GM12878 (cell line): ENCODE measurements at regions of chr20 and their contacts with region 1.

Region 1: GRCh38 chr20:61436678-61437279 is 184.7 kb downstream of the CDH4 start:
- DNase-seq: no peak
- ATAC-seq: no peak
- H3K4me3 ChIP-seq: no peak overlapping the region
- H3K27ac ChIP-seq: no peak overlapping the region
- H3K4me1 ChIP-seq: no peaks in the 10 kb centered on the region
- H3K27me3 ChIP-seq: no peaks in the 10 kb centered on the region
- CTCF ChIP-seq: no peak
- EP300 ChIP-seq: no peak
- POLR2A ChIP-seq: no peak
- RAD21 ChIP-seq: no peak

Region 2: DNA sequence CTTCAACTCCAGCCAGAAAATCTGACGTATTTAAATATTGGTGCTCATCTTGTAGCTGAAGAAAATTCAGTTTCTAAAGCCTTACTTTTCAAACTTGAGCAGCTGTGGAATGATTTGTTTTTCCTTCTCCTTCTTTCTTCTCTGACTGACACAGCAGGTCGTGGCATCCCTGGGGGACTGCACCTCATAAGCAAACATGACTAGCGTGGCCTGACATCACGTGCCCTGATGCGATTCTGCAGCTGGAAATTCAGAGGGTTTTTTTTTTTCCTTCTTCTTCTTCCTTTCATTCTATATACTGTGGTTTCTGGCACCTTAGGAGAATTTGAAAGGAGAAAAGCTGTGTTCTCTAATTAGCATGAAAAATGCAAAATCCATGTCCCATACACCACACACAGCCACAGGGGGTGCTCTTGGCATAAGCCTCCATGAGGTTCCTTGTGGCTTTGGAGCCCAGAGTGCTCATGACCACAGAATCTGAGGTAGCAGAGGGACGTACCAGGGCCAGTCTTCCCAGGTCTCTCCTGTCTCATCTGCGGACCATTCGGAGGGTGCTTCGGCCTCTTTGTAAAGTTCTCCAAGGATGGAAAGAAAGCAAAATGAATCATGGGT is 443.2 kb before region 1 on chr20:
- CTCF ChIA-PET with region 1: no interaction called
- POLR2A ChIA-PET with region 1: no interaction called
- RAD21 ChIA-PET with region 1: no interaction called
- SMC1A ChIA-PET with region 1: no interaction called
- in situ Hi-C with region 1: loop called (anchors 25 kb)
- intact Hi-C with region 1: no loop called
- DNase-seq: no peak
- ATAC-seq: no peak
- H3K4me3 ChIP-seq: no peak overlapping the region
- H3K27ac ChIP-seq: no peak overlapping the region
- H3K4me1 ChIP-seq: no peaks in the 10 kb centered on the region
- H3K27me3 ChIP-seq: no peaks in the 10 kb centered on the region
- CTCF ChIP-seq: no peak
- EP300 ChIP-seq: no peak
- POLR2A ChIP-seq: no peak
- RAD21 ChIP-seq: no peak

Region 3: DNA sequence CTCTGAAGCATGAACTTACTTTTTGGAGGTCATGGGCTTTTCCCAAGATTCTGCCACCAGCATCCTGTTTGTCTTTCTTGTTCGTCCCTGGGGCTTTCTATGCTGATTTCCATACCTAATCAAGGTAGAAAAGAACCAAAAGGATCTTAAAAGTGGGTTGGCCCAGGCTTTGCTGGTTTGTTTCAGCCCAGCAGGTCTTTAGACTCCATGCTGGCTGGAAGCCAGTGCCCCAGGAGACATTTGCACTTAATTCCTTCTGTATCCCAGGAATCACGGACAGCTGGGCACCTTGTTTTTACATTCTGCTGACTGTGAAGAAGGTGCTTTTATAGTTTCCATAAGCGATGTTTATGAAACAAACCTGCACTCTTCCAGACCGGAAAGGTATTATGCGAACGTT is 11.2 kb after region 1 on chr20:
- CTCF ChIA-PET with region 1: no interaction called
- POLR2A ChIA-PET with region 1: no interaction called
- RAD21 ChIA-PET with region 1: no interaction called
- SMC1A ChIA-PET with region 1: no interaction called
- in situ Hi-C with region 1: no loop called
- intact Hi-C with region 1: no loop called
- DNase-seq: no peak
- ATAC-seq: no peak
- H3K4me3 ChIP-seq: no peak overlapping the region
- H3K27ac ChIP-seq: no peak overlapping the region
- H3K4me1 ChIP-seq: no peaks in the 10 kb centered on the region
- H3K27me3 ChIP-seq: no peaks in the 10 kb centered on the region
- CTCF ChIP-seq: no peak
- EP300 ChIP-seq: no peak
- POLR2A ChIP-seq: no peak
- RAD21 ChIP-seq: no peak

Region 4: DNA sequence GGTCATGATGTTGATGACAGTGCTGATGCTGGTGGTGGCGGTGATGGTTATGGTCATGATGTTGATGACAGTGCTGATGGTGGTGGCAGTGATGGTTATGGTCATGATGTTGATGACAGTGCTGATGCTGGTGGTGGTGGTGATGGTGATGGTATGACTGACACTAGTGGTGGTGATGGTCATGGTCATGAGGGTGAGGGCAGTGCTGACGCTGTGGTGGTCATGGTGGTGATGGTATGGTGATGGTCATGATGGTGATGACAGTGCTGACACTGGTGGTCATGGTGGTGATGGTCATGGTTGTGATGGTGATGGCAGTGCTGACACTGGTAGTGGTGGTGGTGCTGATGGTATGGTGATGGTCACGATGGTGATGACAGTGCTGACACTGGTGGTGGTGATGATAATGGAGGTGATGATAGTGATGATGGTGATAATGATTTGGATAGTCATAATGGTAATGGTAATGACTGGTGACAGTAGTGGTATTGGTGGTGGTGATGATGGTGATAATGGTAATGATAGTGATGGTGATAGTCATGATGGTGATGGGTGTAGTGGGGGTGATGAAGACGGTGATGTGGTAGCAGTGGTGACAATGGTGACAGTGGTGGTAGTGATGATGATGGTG is 21.5 kb after region 1 on chr20:
- CTCF ChIA-PET with region 1: no interaction called
- POLR2A ChIA-PET with region 1: no interaction called
- RAD21 ChIA-PET with region 1: no interaction called
- SMC1A ChIA-PET with region 1: no interaction called
- in situ Hi-C with region 1: no loop called
- intact Hi-C with region 1: no loop called
- DNase-seq: no peak
- ATAC-seq: no peak
- H3K4me3 ChIP-seq: no peak overlapping the region
- H3K27ac ChIP-seq: no peak overlapping the region
- H3K4me1 ChIP-seq: no peaks in the 10 kb centered on the region
- H3K27me3 ChIP-seq: no peaks in the 10 kb centered on the region
- CTCF ChIP-seq: no peak
- EP300 ChIP-seq: no peak
- POLR2A ChIP-seq: no peak
- RAD21 ChIP-seq: no peak

Region 5: GRCh38 chr20:61731561-61732181 is 294.9 kb after region 1 on chr20:
- CTCF ChIA-PET with region 1: no interaction called
- POLR2A ChIA-PET with region 1: no interaction called
- RAD21 ChIA-PET with region 1: no interaction called
- SMC1A ChIA-PET with region 1: no interaction called
- in situ Hi-C with region 1: no loop called
- intact Hi-C with region 1: no loop called
- DNase-seq: no peak
- ATAC-seq: no peak
- H3K4me3 ChIP-seq: no peak overlapping the region
- H3K27ac ChIP-seq: no peak overlapping the region
- H3K4me1 ChIP-seq: no peaks in the 10 kb centered on the region
- H3K27me3 ChIP-seq: no peaks in the 10 kb centered on the region
- CTCF ChIP-seq: no peak
- EP300 ChIP-seq: no peak
- POLR2A ChIP-seq: no peak
- RAD21 ChIP-seq: no peak

Region 6: DNA sequence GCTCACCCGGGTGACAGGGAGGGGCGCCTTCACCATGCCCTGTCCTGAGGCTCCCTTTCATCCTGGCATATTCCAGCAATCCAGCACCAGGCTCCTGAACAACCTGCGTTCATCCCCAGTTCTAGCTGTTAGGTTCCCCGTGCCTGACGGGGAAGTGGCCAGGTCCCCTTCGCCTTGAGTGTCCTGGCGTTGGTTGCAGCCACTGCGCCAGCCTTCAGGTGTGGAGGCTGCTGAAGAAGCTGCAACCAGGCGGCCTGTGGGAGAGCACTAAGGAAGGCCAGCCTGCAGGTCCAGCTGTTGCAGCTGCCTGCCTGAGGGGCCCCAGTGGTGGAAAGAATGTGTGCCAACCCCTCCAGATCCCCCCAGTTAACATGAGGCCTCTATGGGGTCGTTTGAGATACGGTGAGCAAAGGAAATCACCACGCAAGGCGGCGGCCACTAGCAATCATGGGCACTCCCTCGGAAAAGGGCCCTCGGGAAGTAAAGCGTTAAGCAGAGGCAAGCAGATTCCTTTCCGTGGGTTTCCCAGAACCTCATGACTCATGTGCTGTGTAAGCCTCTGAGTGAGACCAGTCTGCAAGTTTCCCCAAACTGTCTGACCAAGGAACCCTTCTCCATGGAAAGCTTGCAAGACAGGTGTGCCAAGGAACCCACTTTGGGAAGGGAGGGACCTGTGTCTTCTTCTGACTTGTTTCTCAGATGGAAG is 308.1 kb after region 1 on chr20:
- CTCF ChIA-PET with region 1: no interaction called
- POLR2A ChIA-PET with region 1: no interaction called
- RAD21 ChIA-PET with region 1: no interaction called
- SMC1A ChIA-PET with region 1: no interaction called
- in situ Hi-C with region 1: no loop called
- intact Hi-C with region 1: no loop called
- DNase-seq: no peak
- ATAC-seq: no peak
- H3K4me3 ChIP-seq: no peak overlapping the region
- H3K27ac ChIP-seq: no peak overlapping the region
- H3K4me1 ChIP-seq: no peaks in the 10 kb centered on the region
- H3K27me3 ChIP-seq: no peaks in the 10 kb centered on the region
- CTCF ChIP-seq: no peak
- EP300 ChIP-seq: no peak
- POLR2A ChIP-seq: no peak
- RAD21 ChIP-seq: no peak